HepG2 (cell line): ENCODE measurements at regions of chr19 and their contacts with region 1.

Region 1: GRCh38 chr19:11738746-11739620 is at the start of gene ZNF823:
- DNase-seq: peak; percentile 98
- ATAC-seq: peak; percentile 93
- H3K4me3 ChIP-seq: peak within 1 kb of the TSS; percentile 84 to 97 (median 93)
- H3K27ac ChIP-seq: peak within 1 kb of the TSS; percentile 88
- H3K4me1 ChIP-seq: peaks cover 34% of the 10 kb centered on the region
- H3K27me3 ChIP-seq: no peaks in the 10 kb centered on the region
- CTCF ChIP-seq: no peak
- EP300 ChIP-seq: no peak
- POLR2A ChIP-seq: peak; percentile 72 to 73
- RAD21 ChIP-seq: no peak
- total RNA-seq, gene ZNF823: 11.7 and 18.2 TPM in 2 replicates

Region 2: DNA sequence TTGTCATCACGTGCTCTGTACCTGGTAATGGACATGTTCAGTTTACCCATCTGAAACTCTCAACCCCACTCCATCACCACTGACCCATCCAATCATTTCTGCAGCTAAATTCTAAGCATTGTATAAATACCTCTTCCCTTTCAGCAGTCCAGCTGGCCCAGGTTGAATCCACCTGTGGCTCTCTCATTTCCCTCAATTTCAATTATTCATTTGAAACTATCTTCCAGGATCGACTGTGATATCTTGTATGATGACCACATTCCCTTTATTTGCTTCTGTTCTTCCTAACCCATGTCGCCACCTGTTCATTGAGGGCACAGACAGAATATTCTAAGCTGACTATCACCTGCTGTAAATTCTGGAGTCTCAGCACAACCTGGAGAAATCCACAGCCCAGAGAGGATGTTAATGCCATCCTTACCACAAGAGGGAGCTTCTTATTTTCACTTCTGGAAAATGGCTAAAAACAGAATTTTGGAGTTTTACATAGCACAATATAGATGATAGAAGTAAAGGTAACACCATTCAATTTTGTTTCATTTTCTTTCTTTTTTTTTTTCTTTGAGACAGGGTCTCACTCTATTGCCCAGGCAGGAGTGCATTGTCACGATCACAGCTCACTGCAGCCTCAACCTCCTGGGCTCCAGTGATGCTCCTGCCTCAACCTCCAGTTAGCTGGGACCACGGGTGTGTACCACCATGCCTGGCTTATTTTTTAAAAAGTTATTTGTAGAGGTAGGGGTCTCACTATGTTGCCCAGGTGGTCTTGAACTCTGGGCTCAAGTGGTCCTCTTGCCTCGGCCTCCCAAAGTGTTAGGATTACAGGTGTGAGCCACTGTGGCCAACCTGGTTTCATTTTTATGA is 38.8 kb before region 1 on chr19:
- CTCF ChIA-PET with region 1: no interaction called
- POLR2A ChIA-PET with region 1: interaction called, 3 read pairs
- in situ Hi-C with region 1: no loop called
- intact Hi-C with region 1: loop called (anchors 5 kb)
- DNase-seq: peak; percentile 33
- ATAC-seq: peak; percentile 65
- H3K4me3 ChIP-seq: no peak overlapping the region
- H3K27ac ChIP-seq: no peak overlapping the region
- H3K4me1 ChIP-seq: peaks cover 39% of the 10 kb centered on the region
- H3K27me3 ChIP-seq: peaks cover 0 to 3% of the 10 kb centered on the region in 2 experiments; a peak in 1 of 5 replicates
- CTCF ChIP-seq: peak; percentile 68
- EP300 ChIP-seq: no peak
- POLR2A ChIP-seq: no peak
- RAD21 ChIP-seq: no peak

Region 3: GRCh38 chr19:11766597-11767591 is 27.9 kb after region 1 on chr19 and contains the start of gene ZNF441:
- CTCF ChIA-PET with region 1: no interaction called
- POLR2A ChIA-PET with region 1: interaction called, 17 read pairs
- in situ Hi-C with region 1: no loop called
- intact Hi-C with region 1: loop called (anchors 2 kb)
- DNase-seq: peak; percentile 94
- ATAC-seq: peak; percentile 93
- H3K4me3 ChIP-seq: peak within 1 kb of the TSS; percentile 72 to 89 (median 81)
- H3K27ac ChIP-seq: peak within 1 kb of the TSS; percentile 85
- H3K4me1 ChIP-seq: peaks cover 32% of the 10 kb centered on the region
- H3K27me3 ChIP-seq: no peaks in the 10 kb centered on the region; a peak in 2 of 5 replicates
- CTCF ChIP-seq: no peak
- EP300 ChIP-seq: 0 out of 4 replicates have a peak, but pooled peaks of 1 of the 2 experiments have one; percentile 22
- POLR2A ChIP-seq: peak; percentile 77 to 93
- RAD21 ChIP-seq: no peak; the same call in 1 of the 2 replicates
- total RNA-seq, gene ZNF441: 10.0 and 18.0 TPM in 2 replicates

Region 4: GRCh38 chr19:11848594-11849469 is 109.8 kb after region 1 on chr19 and contains the start of gene ZNF439:
- CTCF ChIA-PET with region 1: no interaction called
- POLR2A ChIA-PET with region 1: no interaction called
- in situ Hi-C with region 1: no loop called
- intact Hi-C with region 1: no loop called
- DNase-seq: peak; percentile 85
- ATAC-seq: peak; percentile 97
- H3K4me3 ChIP-seq: peak within 1 kb of the TSS; percentile 64 to 82 (median 75)
- H3K27ac ChIP-seq: no peak within 1 kb of the TSS
- H3K4me1 ChIP-seq: peaks cover 28% of the 10 kb centered on the region
- H3K27me3 ChIP-seq: no peaks in the 10 kb centered on the region; a peak in 1 of 5 replicates
- CTCF ChIP-seq: no peak
- EP300 ChIP-seq: no peak
- POLR2A ChIP-seq: peak; percentile 35 to 67; a peak in 3 of 4 replicates
- RAD21 ChIP-seq: no peak
- total RNA-seq, gene ZNF439: 3.9 and 4.9 TPM in 2 replicates